Activated CD4-positive, alpha-beta T cell treated with anti-CD3 and anti-CD28 coated beads for 36 hours (primary cell): ENCODE measurements at regions of chr18 and their contacts with region 1.

Region 1: GRCh38 chr18:66916834-66917233 is 312.9 kb upstream of the CDH19 start:
- DNase-seq: no peak
- ATAC-seq: no peak
- H3K4me3 Mint-ChIP-seq: no peak overlapping the region
- H3K27ac Mint-ChIP-seq: no peak overlapping the region
- H3K4me1 Mint-ChIP-seq: no peaks in the 10 kb centered on the region
- H3K27me3 Mint-ChIP-seq: no peaks in the 10 kb centered on the region

Region 2: DNA sequence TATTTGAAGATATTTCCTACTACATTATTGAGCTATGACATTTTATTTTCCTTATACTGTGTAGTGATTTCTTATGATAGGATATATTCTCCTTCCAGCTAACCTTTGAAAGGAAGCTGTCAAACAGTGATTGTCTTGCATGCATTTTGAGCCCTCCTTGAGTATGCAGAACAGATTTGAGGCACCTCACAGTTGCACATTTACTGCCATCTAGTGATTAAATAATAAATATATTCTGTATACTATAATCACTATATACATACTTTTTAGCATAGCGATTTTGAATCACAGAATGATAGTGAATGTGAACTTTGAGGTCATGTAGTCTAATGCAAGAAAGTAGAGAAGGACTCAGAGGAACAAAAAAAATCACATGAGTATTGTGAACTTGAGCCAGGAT is 44.6 kb before region 1 on chr18:
- CTCF ChIA-PET with region 1: no interaction called
- POLR2A ChIA-PET with region 1: no interaction called
- intact Hi-C with region 1: loop called in 1 of 2 experiments (anchors 5 kb)
- DNase-seq: no peak
- ATAC-seq: no peak
- H3K4me3 Mint-ChIP-seq: no peak overlapping the region
- H3K27ac Mint-ChIP-seq: no peak overlapping the region
- H3K4me1 Mint-ChIP-seq: no peaks in the 10 kb centered on the region
- H3K27me3 Mint-ChIP-seq: no peaks in the 10 kb centered on the region